HepG2 (cell line): ENCODE measurements at regions of chr5 and their contacts with region 1.

Region 1: GRCh38 chr5:96344678-96345577 is 88.1 kb downstream of the PCSK1 start:
- DNase-seq: peak; percentile 64
- ATAC-seq: peak; percentile 94
- H3K4me3 ChIP-seq: no peak overlapping the region
- H3K27ac ChIP-seq: no peak overlapping the region
- H3K4me1 ChIP-seq: peaks cover 29% of the 10 kb centered on the region
- H3K27me3 ChIP-seq: no peaks in the 10 kb centered on the region
- CTCF ChIP-seq: peak; percentile 83
- EP300 ChIP-seq: no peak
- POLR2A ChIP-seq: no peak
- RAD21 ChIP-seq: peak; percentile 76

Region 2: GRCh38 chr5:96601811-96602244 is 256.9 kb after region 1 on chr5:
- CTCF ChIA-PET with region 1: interaction called, 25 read pairs
- POLR2A ChIA-PET with region 1: no interaction called
- in situ Hi-C with region 1: loop called (anchors 5 kb)
- intact Hi-C with region 1: loop called (anchors 1 kb)
- DNase-seq: peak; percentile 56
- ATAC-seq: peak; percentile 90
- H3K4me3 ChIP-seq: no peak overlapping the region
- H3K27ac ChIP-seq: no peak overlapping the region
- H3K4me1 ChIP-seq: peaks cover 12% of the 10 kb centered on the region; the same call in 1 of the 2 replicates
- H3K27me3 ChIP-seq: peaks cover 0 to 5% of the 10 kb centered on the region in 2 experiments; a peak in 1 of 5 replicates
- CTCF ChIP-seq: peak; percentile 76
- EP300 ChIP-seq: no peak
- POLR2A ChIP-seq: no peak
- RAD21 ChIP-seq: peak; percentile 49; the same call in 1 of the 2 replicates

Region 3: GRCh38 chr5:96662725-96663513 is 318.0 kb after region 1 on chr5:
- CTCF ChIA-PET with region 1: no interaction called
- POLR2A ChIA-PET with region 1: no interaction called
- in situ Hi-C with region 1: no loop called
- intact Hi-C with region 1: loop called (anchors 10 kb)
- DNase-seq: peak; percentile 69
- ATAC-seq: peak; percentile 82
- H3K4me3 ChIP-seq: peak overlapping the region; percentile 87 to 94 (median 94)
- H3K27ac ChIP-seq: peak overlapping the region; percentile 59
- H3K4me1 ChIP-seq: peaks cover 28% of the 10 kb centered on the region
- H3K27me3 ChIP-seq: no peaks in the 10 kb centered on the region; a peak in 2 of 5 replicates
- CTCF ChIP-seq: no peak
- EP300 ChIP-seq: no peak
- POLR2A ChIP-seq: peak; percentile 27 to 42; a peak in 1 of 4 replicates
- RAD21 ChIP-seq: no peak

Region 4: DNA sequence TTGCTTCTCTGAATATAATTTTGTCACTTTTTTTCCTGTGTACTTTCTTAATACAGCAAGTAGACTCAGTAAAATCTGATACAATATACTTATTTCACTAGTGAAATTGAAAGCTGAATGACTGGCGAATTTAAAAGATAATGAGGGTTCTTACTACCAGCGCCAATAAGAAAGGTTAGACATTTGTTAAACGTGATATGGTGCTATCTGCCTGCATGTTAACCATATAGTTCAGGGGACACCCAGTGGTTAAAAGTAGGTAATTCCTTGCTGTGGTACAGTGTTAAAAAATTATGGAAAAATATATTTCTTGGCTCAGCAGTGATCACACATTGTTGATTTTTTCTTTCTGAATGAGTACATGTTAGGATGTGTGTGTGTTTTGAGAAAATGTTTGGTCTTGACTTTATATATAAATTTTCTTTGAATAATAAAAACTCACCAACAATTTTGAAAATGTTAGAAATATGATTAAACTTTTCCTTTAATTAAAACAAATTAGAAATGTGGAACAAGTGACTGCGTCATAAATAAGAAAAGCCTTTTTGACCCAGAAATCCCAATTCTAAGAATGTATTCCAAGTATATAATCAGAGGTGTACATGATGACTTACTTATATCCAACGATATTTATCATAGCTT is 343.0 kb after region 1 on chr5:
- CTCF ChIA-PET with region 1: interaction called, 3 read pairs
- POLR2A ChIA-PET with region 1: no interaction called
- in situ Hi-C with region 1: no loop called
- intact Hi-C with region 1: loop called (anchors 5 kb)
- DNase-seq: peak; percentile 49
- ATAC-seq: peak; percentile 95
- H3K4me3 ChIP-seq: no peak overlapping the region
- H3K27ac ChIP-seq: no peak overlapping the region
- H3K4me1 ChIP-seq: peaks cover 9% of the 10 kb centered on the region; the same call in 1 of the 2 replicates
- H3K27me3 ChIP-seq: no peaks in the 10 kb centered on the region
- CTCF ChIP-seq: peak; percentile 63
- EP300 ChIP-seq: no peak
- POLR2A ChIP-seq: no peak
- RAD21 ChIP-seq: peak; percentile 33; the same call in 1 of the 2 replicates

Region 5: DNA sequence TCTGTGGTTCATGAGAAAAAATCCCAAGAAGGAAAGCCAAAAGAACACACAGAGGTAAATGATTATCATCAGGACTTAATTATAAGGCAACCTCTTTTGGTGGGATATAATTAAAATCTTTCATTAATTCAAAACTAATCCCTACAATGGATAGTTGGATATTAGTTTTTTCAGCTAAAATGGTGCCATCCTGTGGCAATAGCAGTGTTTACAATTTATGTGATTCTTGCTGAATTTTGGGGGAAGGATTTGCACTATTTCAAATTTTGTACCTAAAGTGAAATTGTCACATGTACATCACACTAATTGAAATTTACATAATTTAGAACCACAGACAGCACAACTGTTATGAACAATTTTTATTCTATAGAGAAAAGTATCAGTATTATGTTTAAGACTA is 384.2 kb after region 1 on chr5:
- CTCF ChIA-PET with region 1: no interaction called
- POLR2A ChIA-PET with region 1: no interaction called
- in situ Hi-C with region 1: no loop called
- intact Hi-C with region 1: loop called (anchors 10 kb)
- DNase-seq: no peak
- ATAC-seq: no peak
- H3K4me3 ChIP-seq: no peak overlapping the region
- H3K27ac ChIP-seq: no peak overlapping the region
- H3K4me1 ChIP-seq: no peaks in the 10 kb centered on the region
- H3K27me3 ChIP-seq: no peaks in the 10 kb centered on the region
- CTCF ChIP-seq: peak; percentile 34; the same call in 1 of the 2 replicates
- EP300 ChIP-seq: no peak
- POLR2A ChIP-seq: no peak
- RAD21 ChIP-seq: no peak

Region 6: GRCh38 chr5:96997265-96997859 is 652.4 kb after region 1 on chr5:
- CTCF ChIA-PET with region 1: no interaction called
- POLR2A ChIA-PET with region 1: no interaction called
- in situ Hi-C with region 1: no loop called
- intact Hi-C with region 1: no loop called
- DNase-seq: peak; percentile 41
- ATAC-seq: peak; percentile 77
- H3K4me3 ChIP-seq: no peak overlapping the region
- H3K27ac ChIP-seq: no peak overlapping the region
- H3K4me1 ChIP-seq: peaks cover 10% of the 10 kb centered on the region
- H3K27me3 ChIP-seq: no peaks in the 10 kb centered on the region
- CTCF ChIP-seq: peak; percentile 40; the same call in 1 of the 2 replicates
- EP300 ChIP-seq: no peak
- POLR2A ChIP-seq: no peak
- RAD21 ChIP-seq: no peak

Region 7: DNA sequence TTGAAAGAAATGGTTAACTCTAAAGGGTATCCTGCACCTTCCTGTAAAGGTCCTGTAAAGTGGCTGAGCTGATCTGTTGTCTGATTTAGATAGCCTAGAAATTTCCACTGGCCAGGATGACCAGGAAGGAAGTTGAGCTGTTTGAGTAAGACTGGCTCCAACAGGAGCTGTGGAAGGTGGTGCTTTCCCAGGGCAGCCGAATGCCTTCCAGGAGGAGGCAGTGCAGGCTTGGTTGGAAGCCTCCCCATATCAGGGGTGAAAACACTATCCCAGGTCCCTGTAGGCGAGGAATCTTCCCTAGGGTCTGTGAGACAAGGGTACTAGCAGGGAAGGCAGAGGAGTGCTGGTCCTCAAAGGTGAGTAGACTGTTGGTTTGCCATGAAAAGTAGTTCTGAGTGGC is 699.1 kb after region 1 on chr5:
- CTCF ChIA-PET with region 1: no interaction called
- POLR2A ChIA-PET with region 1: no interaction called
- in situ Hi-C with region 1: no loop called
- intact Hi-C with region 1: loop called (anchors 10 kb)
- DNase-seq: peak; percentile 27
- ATAC-seq: peak; percentile 97
- H3K4me3 ChIP-seq: no peak overlapping the region
- H3K27ac ChIP-seq: no peak overlapping the region
- H3K4me1 ChIP-seq: peaks cover 23% of the 10 kb centered on the region
- H3K27me3 ChIP-seq: no peaks in the 10 kb centered on the region
- CTCF ChIP-seq: peak; percentile 84
- EP300 ChIP-seq: no peak
- POLR2A ChIP-seq: no peak
- RAD21 ChIP-seq: peak; percentile 46